ENCODE measurements at regions of chr18 and their contacts with region 1.

Region 1: GRCh38 chr18:76922107-76922506 is 99.8 kb downstream of the ZNF236 start:
- DNase-seq: peak; percentile 39
- ATAC-seq: peak; percentile 100
- H3K4me3 Mint-ChIP-seq: peak overlapping the region; percentile 13
- H3K27ac Mint-ChIP-seq: peak overlapping the region; percentile 57
- H3K4me1 Mint-ChIP-seq: peaks cover 8% of the 10 kb centered on the region
- H3K27me3 Mint-ChIP-seq: no peaks in the 10 kb centered on the region
- CTCF ChIP-seq: no peak

Region 2: DNA sequence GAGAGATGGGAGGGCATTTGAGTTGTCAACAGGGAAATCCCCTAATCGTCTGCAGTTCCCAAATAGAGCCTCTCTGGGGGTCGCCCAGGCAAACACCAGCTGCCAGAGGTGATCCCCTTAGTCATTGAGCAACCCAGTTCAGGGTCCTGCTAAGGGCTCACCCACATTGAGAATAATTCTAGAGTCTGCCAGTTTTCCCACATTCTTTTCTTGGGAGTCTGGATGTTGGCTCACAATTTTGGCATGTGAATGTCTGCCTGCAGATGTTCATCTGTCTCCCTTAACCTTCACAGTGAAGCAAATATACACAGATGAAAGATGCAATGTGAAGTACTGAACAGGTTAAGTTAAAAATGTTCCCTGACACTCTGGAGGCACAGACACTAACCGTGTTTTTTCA is 1483.2 kb before region 1 on chr18:
- CTCF ChIA-PET with region 1: no interaction called
- POLR2A ChIA-PET with region 1: no interaction called
- intact Hi-C with region 1: no loop called
- DNase-seq: no peak
- ATAC-seq: no peak
- H3K4me3 Mint-ChIP-seq: no peak overlapping the region
- H3K27ac Mint-ChIP-seq: no peak overlapping the region
- H3K4me1 Mint-ChIP-seq: no peaks in the 10 kb centered on the region
- H3K27me3 Mint-ChIP-seq: peaks cover 8% of the 10 kb centered on the region
- CTCF ChIP-seq: no peak

Region 3: GRCh38 chr18:76018211-76018610 is 903.9 kb before region 1 on chr18:
- CTCF ChIA-PET with region 1: no interaction called
- POLR2A ChIA-PET with region 1: no interaction called
- intact Hi-C with region 1: no loop called
- DNase-seq: no peak
- ATAC-seq: no peak
- H3K4me3 Mint-ChIP-seq: no peak overlapping the region
- H3K27ac Mint-ChIP-seq: no peak overlapping the region
- H3K4me1 Mint-ChIP-seq: no peaks in the 10 kb centered on the region
- H3K27me3 Mint-ChIP-seq: no peaks in the 10 kb centered on the region
- CTCF ChIP-seq: no peak

Region 4: DNA sequence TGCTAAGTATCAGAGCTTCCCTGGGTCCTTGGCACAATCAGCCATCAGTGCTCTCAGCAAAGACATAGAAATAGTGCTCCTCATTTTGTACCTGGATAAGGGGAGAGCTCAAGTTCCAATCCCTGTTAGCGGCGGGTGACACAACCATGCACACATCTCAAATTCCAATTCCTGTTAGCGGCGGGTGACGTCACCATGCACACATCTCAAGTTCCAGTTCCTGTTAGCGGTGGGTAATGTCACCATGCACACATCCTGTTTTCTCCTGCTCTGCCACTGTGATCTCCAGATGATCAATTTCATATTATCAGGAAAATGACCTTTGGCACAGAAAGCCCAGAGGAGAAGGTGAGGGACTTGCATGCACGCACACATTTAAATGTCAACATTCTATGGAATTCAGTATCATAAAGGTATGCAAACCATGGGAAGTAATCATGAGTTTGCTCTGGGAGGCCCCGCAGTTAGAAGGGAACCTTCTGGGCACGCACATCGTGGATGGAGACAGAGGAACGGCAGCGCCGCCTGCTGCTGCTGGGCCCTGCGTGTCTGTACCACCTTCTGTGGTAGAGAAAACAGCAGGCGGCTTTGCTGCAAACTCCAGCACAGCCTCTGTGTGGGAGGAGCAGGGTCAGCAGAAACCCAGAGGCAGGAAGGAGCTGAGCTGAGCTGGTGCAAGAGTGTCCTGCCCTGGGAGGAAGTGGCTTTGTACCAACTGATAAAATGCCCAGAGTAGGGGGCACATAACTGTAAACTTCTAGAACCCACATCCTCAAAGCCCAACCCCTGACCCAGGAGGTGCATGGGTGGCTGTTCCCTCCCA is 132.7 kb after region 1 on chr18:
- CTCF ChIA-PET with region 1: interaction called, 7 read pairs
- POLR2A ChIA-PET with region 1: interaction called, 5 read pairs
- intact Hi-C with region 1: loop called (anchors 1 kb)
- DNase-seq: peak; percentile 57
- ATAC-seq: peak; percentile 65
- H3K4me3 Mint-ChIP-seq: peak overlapping the region; percentile 67
- H3K27ac Mint-ChIP-seq: peak overlapping the region; percentile 91
- H3K4me1 Mint-ChIP-seq: peaks cover 65% of the 10 kb centered on the region
- H3K27me3 Mint-ChIP-seq: no peaks in the 10 kb centered on the region
- CTCF ChIP-seq: no peak

Region 5: GRCh38 chr18:77207540-77207939 is 285.4 kb after region 1 on chr18:
- CTCF ChIA-PET with region 1: interaction called, 44 read pairs
- POLR2A ChIA-PET with region 1: interaction called, 3 read pairs
- intact Hi-C with region 1: loop called (anchors 1 kb)
- DNase-seq: no peak
- ATAC-seq: peak; percentile 87
- H3K4me3 Mint-ChIP-seq: peak overlapping the region; percentile 64
- H3K27ac Mint-ChIP-seq: peak overlapping the region; percentile 74
- H3K4me1 Mint-ChIP-seq: peaks cover 25% of the 10 kb centered on the region
- H3K27me3 Mint-ChIP-seq: peaks cover 2% of the 10 kb centered on the region
- CTCF ChIP-seq: no peak

Region 6: GRCh38 chr18:77470569-77471413 is 548.7 kb after region 1 on chr18:
- CTCF ChIA-PET with region 1: no interaction called
- POLR2A ChIA-PET with region 1: no interaction called
- intact Hi-C with region 1: loop called (anchors 2 kb)
- DNase-seq: no peak
- ATAC-seq: no peak
- H3K4me3 Mint-ChIP-seq: no peak overlapping the region
- H3K27ac Mint-ChIP-seq: no peak overlapping the region
- H3K4me1 Mint-ChIP-seq: no peaks in the 10 kb centered on the region
- H3K27me3 Mint-ChIP-seq: peaks cover 10% of the 10 kb centered on the region
- CTCF ChIP-seq: no peak

Region 7: GRCh38 chr18:77702686-77703085 is 780.6 kb after region 1 on chr18:
- CTCF ChIA-PET with region 1: no interaction called
- POLR2A ChIA-PET with region 1: no interaction called
- intact Hi-C with region 1: loop called (anchors 5 kb)
- DNase-seq: no peak
- ATAC-seq: no peak
- H3K4me3 Mint-ChIP-seq: no peak overlapping the region
- H3K27ac Mint-ChIP-seq: no peak overlapping the region
- H3K4me1 Mint-ChIP-seq: no peaks in the 10 kb centered on the region
- H3K27me3 Mint-ChIP-seq: peaks cover 10% of the 10 kb centered on the region
- CTCF ChIP-seq: no peak

Measured in activated B cell treated with CpG ODN at 0.5 μM for 24 hours (primary cell).